ENCODE measurements at regions of chr15 and their contacts with region 1.

Region 1: DNA sequence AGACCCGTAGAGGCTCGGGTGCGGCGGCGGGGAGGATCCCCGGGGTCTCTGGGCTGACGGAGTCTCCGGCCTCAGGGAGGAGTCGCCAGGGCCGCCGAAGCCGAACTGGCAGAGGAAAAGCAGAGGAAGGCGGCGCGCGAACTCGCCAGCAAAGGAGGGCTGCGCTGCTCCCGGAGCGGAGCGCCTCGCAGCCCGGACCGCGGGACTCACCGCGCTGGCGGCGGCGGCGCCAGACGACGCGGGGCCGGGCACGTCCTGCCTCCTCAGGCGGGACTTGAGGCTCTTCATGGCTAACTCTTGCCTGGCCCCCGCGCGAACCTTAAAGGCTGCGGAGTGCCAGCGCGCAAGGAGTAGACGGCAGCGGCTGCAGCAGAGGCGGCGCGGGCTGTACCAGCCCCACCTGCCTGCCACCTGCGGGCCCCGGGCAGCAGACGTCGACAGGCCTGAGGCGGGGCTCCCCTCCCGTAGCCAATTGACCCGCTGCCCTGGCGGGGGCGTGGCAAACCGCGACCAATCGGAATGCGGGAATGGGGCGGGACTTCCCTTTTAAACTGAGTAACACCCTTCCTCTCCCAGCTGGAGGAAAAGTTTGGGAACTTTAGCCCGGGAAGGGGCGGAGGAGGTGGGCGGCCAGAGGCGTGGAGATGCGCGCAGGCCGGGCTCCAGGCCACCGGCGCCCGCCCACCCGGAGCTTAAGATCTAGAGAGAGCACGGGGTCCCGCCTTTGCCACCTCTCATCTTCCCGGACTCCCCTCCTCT is at the start of gene UACA:
- DNase-seq: peak; percentile 98
- ATAC-seq: peak; percentile 88
- H3K4me3 ChIP-seq: peak within 1 kb of the TSS; percentile 97
- H3K27ac ChIP-seq: peak within 1 kb of the TSS; percentile 80
- H3K4me1 ChIP-seq: peaks cover 16% of the 10 kb centered on the region
- H3K27me3 ChIP-seq: no peaks in the 10 kb centered on the region
- CTCF ChIP-seq: no peak
- total RNA-seq, gene UACA: 21.7 and 26.7 TPM in 2 replicates

Region 2: DNA sequence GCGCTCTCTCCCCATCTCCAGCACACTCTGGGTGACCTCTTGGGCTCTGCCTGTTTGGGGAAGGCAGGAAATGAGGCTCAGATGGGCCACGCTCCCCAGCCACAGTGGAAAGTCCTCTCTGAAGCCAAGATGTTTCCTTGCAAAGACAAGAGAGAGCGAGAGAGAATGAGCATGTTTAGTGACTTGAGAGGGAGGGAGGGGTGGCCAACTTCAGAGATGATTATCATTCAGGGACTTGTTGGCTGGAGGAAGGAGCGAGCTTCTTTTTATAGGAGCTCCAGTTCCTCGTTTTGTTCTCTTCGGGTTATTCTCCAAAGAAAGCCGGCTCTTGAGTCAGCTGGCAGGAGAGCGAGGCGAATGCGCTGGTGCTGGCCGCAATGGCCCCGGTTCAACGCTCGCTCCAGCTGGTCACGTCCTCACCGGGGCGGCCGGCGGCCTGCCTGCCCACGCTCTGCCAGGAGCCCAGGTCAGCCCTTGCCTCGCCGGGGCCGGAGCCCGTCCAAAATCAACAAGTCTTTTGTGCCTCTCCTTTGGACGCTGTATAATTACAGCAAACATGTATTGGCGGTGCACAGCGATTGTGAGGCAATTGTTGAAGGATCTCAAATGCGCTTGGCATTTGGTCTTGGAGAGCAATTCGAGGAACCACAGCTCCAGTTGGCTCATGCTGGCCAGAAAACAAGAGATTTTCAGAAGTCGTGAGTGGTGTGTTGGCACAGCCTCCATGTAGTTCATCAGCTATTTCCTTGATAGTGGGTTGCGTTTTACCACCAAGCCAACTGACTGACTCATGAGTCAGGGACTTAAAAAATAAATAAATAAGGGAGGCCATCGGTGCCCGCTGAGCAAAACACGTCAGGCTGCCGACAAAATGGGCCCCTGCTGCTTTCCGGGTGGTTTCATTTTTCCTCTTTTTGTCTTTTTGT is 288.6 kb before region 1 on chr15:
- CTCF ChIA-PET with region 1: no interaction called
- POLR2A ChIA-PET with region 1: no interaction called
- intact Hi-C with region 1: no loop called
- DNase-seq: peak; percentile 94
- ATAC-seq: peak; percentile 85
- H3K4me3 ChIP-seq: peak overlapping the region; percentile 55
- H3K27ac ChIP-seq: peak overlapping the region; percentile 93
- H3K4me1 ChIP-seq: peaks cover 30% of the 10 kb centered on the region
- H3K27me3 ChIP-seq: no peaks in the 10 kb centered on the region
- CTCF ChIP-seq: no peak

Region 3: GRCh38 chr15:70664494-70664893 is 98.8 kb before region 1 on chr15:
- CTCF ChIA-PET with region 1: no interaction called
- POLR2A ChIA-PET with region 1: no interaction called
- intact Hi-C with region 1: no loop called
- DNase-seq: no peak
- ATAC-seq: no peak
- H3K4me3 ChIP-seq: no peak overlapping the region
- H3K27ac ChIP-seq: no peak overlapping the region
- H3K4me1 ChIP-seq: no peaks in the 10 kb centered on the region
- H3K27me3 ChIP-seq: no peaks in the 10 kb centered on the region
- CTCF ChIP-seq: no peak

Region 4: GRCh38 chr15:70713714-70714414 is 49.4 kb before region 1 on chr15:
- CTCF ChIA-PET with region 1: no interaction called
- POLR2A ChIA-PET with region 1: no interaction called
- intact Hi-C with region 1: no loop called
- DNase-seq: no peak
- ATAC-seq: no peak
- H3K4me3 ChIP-seq: no peak overlapping the region
- H3K27ac ChIP-seq: no peak overlapping the region
- H3K4me1 ChIP-seq: peaks cover 40% of the 10 kb centered on the region
- H3K27me3 ChIP-seq: no peaks in the 10 kb centered on the region
- CTCF ChIP-seq: no peak

Region 5: DNA sequence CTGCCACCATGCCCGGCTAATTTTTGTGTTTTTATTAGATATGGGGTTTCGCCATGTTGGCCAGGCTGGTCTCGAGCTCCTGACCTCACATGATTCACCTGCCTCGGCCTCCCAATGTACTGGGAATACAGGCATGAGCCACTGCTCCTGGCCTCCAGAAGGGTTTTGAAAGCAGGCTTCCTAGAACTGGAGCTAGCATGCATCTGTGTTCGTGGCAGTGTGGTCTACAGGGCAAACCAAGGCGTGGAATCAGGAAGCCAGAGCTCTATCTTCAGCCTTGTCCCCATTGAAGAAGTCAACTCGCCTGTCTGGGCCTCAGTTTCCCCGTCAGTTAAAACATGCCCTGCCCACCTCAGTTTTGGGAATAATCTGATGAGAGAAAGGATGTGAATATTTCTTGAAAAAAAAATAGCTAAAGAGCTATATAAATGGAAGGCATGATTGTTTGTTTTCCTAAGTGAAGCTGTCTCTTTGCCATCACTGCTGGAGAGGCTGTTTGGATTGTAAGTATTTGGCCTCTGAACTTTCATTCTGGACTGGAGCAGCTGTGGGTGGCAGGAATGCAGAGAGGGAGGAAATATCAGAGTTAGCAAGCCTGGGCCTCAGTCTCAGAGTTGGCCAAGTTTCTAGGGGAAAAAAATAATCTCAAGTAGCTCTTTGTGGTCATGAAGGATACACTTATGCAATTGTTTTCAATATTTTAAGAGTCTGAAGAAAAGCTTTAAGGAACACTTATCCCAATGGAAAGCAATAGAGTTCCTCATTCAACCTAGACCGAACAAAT is 36.6 kb after region 1 on chr15:
- CTCF ChIA-PET with region 1: no interaction called
- POLR2A ChIA-PET with region 1: no interaction called
- intact Hi-C with region 1: loop called (anchors 5 kb)
- DNase-seq: peak; percentile 68
- ATAC-seq: peak; percentile 37
- H3K4me3 ChIP-seq: no peak overlapping the region
- H3K27ac ChIP-seq: 0 out of 2 replicates have a peak overlapping the region, but pooled peaks have one; percentile 1
- H3K4me1 ChIP-seq: peaks cover 58% of the 10 kb centered on the region
- H3K27me3 ChIP-seq: no peaks in the 10 kb centered on the region
- CTCF ChIP-seq: no peak

Measured in PC-3 (cell line).